Aorta (tissue), 5 donors: ENCODE measurements at regions of chr1 and their contacts with region 1.

Region 1: DNA sequence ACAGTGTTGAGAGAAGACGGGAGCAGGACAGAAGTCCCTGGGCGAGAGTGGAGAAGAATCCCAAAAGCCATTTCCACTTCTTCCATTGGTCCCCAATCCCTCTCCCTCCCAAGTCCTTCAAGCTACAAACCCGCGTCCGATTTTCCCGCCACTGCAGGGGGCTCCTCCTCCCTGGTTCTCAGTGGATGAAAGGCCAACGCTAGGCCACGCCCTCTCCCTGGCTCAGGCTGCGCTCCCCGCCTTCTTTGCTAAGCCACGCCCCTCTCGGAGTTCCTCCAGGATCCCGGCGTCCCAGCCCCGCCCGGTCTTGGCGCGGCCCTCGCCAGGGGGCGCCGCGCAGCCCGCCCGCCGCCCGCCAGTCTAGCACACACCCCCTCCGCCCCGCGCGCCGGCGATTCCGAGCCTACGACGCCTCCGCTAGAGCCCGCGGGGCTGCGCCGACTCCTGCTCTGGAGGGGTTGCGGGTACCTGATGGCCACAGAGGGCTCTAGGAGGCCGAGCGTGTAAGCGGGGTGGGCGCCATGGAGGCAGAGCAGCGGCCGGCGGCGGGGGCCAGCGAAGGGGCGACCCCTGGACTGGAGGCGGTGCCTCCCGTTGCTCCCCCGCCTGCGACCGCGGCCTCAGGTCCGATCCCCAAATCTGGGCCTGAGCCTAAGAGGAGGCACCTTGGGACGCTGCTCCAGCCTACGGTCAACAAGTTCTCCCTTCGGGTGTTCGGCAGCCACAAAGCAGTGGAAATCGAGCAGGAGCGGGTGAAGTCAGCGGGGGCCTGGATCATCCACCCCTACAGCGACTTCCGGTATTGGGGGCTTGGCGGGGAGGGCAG is at the start of gene HCN3:
- DNase-seq: peak; percentile 98 to 99
- ATAC-seq: peak; percentile 92
- H3K4me3 ChIP-seq: peak within 1 kb of the TSS; percentile 36 to 44
- H3K27ac ChIP-seq: peak within 1 kb of the TSS in 1 of 2 donors; percentile 2
- H3K4me1 ChIP-seq: peaks cover 0 to 3% of the 10 kb centered on the region in 2 donors
- H3K27me3 ChIP-seq: no peaks in the 10 kb centered on the region
- total RNA-seq, gene HCN3: 1.8 to 5.7 TPM

Region 2: GRCh38 chr1:154955718-154956543 is 321.4 kb before region 1 on chr1 and contains the start of gene PBXIP1:
- intact Hi-C with region 1: no loop called
- DNase-seq: peak in 1 of 2 donors; percentile 79
- ATAC-seq: peak; percentile 90
- H3K4me3 ChIP-seq: peak within 1 kb of the TSS; percentile 72 to 74
- H3K27ac ChIP-seq: peak within 1 kb of the TSS; percentile 8 to 86
- H3K4me1 ChIP-seq: peaks cover 0 to 5% of the 10 kb centered on the region in 2 donors
- H3K27me3 ChIP-seq: no peaks in the 10 kb centered on the region
- total RNA-seq, gene PBXIP1: 106 to 119 TPM

Region 3: DNA sequence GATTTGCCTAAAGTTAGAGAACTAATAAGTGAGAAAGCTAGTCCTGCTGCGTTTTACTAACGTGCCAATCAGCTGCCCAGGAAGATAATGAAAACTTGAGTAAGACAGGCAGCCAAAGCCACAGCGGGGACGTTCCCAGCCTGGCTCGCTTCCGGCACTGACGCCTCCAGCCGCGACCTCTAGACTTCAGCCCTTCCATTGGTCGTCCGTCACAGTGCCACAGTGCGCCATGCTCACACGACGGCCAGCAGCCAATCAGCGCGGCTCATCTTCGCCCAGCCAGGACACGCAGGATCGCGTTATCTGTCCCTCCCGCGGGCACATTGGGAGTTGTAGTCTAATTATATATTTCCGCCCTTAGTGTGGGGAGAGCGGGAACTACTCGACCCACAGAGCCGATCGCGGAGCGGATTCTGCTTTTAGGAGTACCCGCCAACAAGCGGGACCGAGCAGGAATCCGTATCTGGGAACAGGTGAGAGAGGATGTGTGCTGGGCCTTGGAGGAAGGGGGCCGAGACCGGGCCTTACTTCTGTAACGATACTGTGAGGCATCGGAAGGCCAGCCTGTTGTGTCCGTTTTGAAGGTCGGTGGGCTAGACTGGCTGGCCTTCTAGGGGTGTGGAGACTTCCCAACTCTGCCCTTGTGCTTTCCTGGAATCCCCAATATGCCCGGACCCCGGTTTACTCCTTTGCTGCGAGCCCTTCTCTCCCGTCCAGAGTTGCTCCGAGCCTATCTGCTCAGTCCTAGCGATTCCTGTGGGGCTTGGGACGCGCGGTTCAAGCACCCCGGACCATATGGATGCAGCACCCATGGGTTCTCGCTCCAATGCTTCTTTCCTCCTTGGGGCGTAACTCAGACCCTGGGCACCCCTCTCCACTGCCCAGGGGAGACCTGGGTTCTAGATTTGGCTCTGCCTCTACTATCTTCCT is 31.5 kb after region 1 on chr1 and contains the start of gene FDPS:
- intact Hi-C with region 1: loop called in 1 of 2 experiments (anchors 5 kb)
- DNase-seq: peak; percentile 99 to 100
- ATAC-seq: peak; percentile 99
- H3K4me3 ChIP-seq: peak within 1 kb of the TSS; percentile 50 to 53
- H3K27ac ChIP-seq: peak within 1 kb of the TSS in 1 of 2 donors; percentile 71
- H3K4me1 ChIP-seq: peaks cover 0 to 1% of the 10 kb centered on the region in 2 donors
- H3K27me3 ChIP-seq: no peaks in the 10 kb centered on the region
- total RNA-seq, gene FDPS: 88.6 to 104 TPM